GM12878 (cell line): ENCODE measurements at regions of chr5 and their contacts with region 1.

Region 1: DNA sequence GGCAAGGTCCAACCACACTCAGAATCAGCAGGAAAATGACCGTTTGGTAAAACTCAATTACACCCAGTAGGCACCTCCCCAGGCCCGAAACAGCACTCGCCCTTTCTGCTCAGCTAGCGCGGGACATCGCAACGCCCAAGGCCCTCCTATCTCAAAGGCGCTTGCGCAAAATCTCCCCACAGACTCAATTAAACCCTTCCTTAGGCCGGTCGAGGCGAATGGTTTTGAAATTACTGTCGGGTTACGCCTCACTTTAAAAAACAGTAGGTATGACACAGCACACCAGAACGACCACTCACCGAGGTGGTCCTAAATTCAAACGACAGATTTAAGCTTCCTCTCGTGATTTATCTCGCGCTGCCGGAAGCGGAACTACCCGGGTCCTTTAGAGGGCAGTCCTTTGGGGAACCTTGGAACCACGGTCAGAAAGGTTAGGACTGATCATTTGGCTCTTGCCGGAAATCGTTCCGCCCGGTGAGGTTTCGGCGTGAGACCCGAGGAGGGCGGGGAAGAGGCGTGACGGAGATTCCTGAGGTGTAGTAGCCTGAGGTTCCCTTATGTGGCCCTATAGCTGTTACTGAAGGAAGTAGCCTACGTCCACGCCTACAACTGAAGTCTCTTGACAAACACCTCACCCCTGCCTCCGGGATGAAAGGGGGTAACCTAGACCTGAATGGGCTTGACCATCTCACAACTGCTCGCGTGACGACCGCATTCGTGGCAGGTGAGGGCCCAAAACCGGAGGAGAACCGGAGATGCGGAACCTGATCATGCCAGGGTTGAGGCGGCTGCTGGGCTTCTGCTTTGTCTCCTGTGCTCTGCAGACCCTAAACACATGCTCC is at the starts of genes GIN1 and PPIP5K2:
- DNase-seq: peak; percentile 98
- ATAC-seq: peak; percentile 86
- H3K4me3 ChIP-seq: peak within 1 kb of the TSS; percentile 97
- H3K27ac ChIP-seq: peak within 1 kb of the TSS; percentile 97
- H3K4me1 ChIP-seq: no peaks in the 10 kb centered on the region
- H3K27me3 ChIP-seq: no peaks in the 10 kb centered on the region
- CTCF ChIP-seq: no peak
- EP300 ChIP-seq: peak; percentile 42 to 43; a peak in 2 of 4 replicates
- POLR2A ChIP-seq: peak; percentile 75
- RAD21 ChIP-seq: no peak
- polyA plus RNA-seq, gene GIN1: 5.3 to 7.6 TPM
- polyA plus RNA-seq, gene PPIP5K2: 33.4 to 41.2 TPM

Region 2: DNA sequence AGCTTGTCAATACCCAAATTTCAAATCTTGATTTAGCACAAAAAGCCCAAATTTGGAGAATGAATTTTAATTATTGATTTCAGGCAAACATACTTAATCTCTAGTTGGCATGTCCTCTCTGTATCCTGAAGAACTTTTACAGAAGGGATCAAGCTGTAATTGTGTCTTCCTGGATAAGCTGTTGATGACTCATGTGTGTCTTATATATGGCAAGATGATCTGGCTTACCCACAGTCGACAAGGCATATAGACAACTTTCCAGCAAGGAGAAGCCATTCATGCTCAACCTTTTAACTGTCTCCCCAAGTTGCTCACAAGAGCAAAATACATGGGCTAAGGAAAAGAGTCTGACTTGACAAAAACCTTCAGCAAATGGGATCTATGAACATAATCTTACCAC is 508.7 kb before region 1 on chr5:
- CTCF ChIA-PET with region 1: no interaction called
- POLR2A ChIA-PET with region 1: no interaction called
- RAD21 ChIA-PET with region 1: no interaction called
- SMC1A ChIA-PET with region 1: no interaction called
- in situ Hi-C with region 1: no loop called
- intact Hi-C with region 1: no loop called
- DNase-seq: no peak
- ATAC-seq: no peak
- H3K4me3 ChIP-seq: no peak overlapping the region
- H3K27ac ChIP-seq: no peak overlapping the region
- H3K4me1 ChIP-seq: no peaks in the 10 kb centered on the region
- H3K27me3 ChIP-seq: no peaks in the 10 kb centered on the region
- CTCF ChIP-seq: no peak
- EP300 ChIP-seq: no peak
- POLR2A ChIP-seq: no peak
- RAD21 ChIP-seq: no peak

Region 3: DNA sequence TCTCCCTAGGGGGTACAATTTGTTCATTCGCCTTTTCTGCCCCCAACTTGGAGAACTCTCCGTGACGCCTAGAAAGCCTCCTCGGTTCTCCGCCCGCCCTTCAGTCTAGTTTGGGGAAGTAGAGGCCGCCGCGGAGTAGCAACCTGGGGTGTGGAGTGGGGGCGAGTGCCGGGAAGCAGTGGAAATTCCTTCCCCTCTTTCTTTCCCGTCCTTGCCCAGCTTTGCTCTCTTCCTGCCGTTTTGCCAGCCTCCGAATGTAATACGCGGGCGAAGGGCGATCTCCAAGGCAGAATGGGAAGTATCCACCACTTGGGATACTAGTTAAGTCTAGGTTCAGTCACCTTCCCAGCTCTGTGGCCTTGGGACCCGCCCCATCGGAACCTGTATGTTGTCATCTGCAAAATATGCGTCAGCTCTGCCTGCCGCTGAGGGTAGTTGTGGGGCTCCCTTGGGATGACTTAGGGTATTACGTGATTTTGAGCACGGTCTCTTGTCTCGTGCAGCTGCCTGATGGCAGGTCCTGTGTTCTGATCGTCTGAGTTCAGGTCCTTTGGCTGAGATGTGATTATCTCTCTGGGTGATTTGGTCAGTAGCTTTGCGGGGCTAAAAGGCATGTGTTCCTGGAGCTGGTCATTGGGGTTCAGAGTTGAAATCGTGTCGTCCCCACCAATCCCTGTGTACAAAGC is 364.2 kb before region 1 on chr5:
- CTCF ChIA-PET with region 1: interaction called, 5 read pairs
- POLR2A ChIA-PET with region 1: interaction called, 8 read pairs
- RAD21 ChIA-PET with region 1: interaction called, 5 read pairs
- SMC1A ChIA-PET with region 1: interaction called, 10 read pairs
- in situ Hi-C with region 1: loop called (anchors 10 kb)
- intact Hi-C with region 1: loop called (anchors 5 kb)
- DNase-seq: peak; percentile 57
- ATAC-seq: peak; percentile 77
- H3K4me3 ChIP-seq: peak overlapping the region; percentile 99
- H3K27ac ChIP-seq: peak overlapping the region; percentile 81
- H3K4me1 ChIP-seq: peaks cover 11% of the 10 kb centered on the region
- H3K27me3 ChIP-seq: no peaks in the 10 kb centered on the region; a peak in 1 of 4 replicates
- CTCF ChIP-seq: no peak
- EP300 ChIP-seq: peak in 1 of 2 experiments; percentile 10; a peak in 1 of 4 replicates
- POLR2A ChIP-seq: no peak; the same call in 1 of the 2 replicates
- RAD21 ChIP-seq: no peak

Region 4: GRCh38 chr5:102762095-102762534 is 357.9 kb before region 1 on chr5:
- CTCF ChIA-PET with region 1: interaction called, 5 read pairs
- POLR2A ChIA-PET with region 1: interaction called, 3 read pairs
- RAD21 ChIA-PET with region 1: interaction called, 7 read pairs
- SMC1A ChIA-PET with region 1: interaction called, 10 read pairs
- in situ Hi-C with region 1: loop called (anchors 10 kb)
- intact Hi-C with region 1: loop called (anchors 5 kb)
- DNase-seq: no peak
- ATAC-seq: peak; percentile 83
- H3K4me3 ChIP-seq: peak overlapping the region; percentile 70
- H3K27ac ChIP-seq: peak overlapping the region; percentile 79
- H3K4me1 ChIP-seq: peaks cover 6% of the 10 kb centered on the region; the same call in 1 of the 2 replicates
- H3K27me3 ChIP-seq: no peaks in the 10 kb centered on the region
- CTCF ChIP-seq: no peak
- EP300 ChIP-seq: no peak
- POLR2A ChIP-seq: no peak
- RAD21 ChIP-seq: no peak

Region 5: DNA sequence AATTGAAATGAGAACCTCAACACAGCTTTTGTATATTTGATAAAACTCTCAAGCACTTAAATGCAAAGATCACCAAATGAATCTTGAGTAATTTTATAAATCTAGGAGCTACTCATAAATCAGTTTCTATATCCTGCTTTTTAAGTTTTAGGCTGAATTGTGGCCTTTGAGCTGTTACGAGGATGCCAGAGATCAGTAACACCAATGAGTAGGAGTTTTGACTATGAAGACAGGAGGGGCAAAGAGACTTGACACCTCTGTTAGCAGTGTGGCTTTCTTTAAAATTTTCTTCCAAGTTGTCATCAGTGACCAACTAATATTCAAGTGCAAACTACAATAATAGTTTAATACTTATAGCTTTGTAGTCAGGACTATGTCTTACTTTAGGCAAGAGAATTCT is 12.7 kb after region 1 on chr5:
- CTCF ChIA-PET with region 1: interaction called, 10 read pairs
- POLR2A ChIA-PET with region 1: interaction called, 5 read pairs
- RAD21 ChIA-PET with region 1: interaction called, 4 read pairs
- SMC1A ChIA-PET with region 1: interaction called, 12 read pairs
- in situ Hi-C with region 1: no loop called
- intact Hi-C with region 1: no loop called
- DNase-seq: no peak
- ATAC-seq: peak; percentile 42; the same call in 2 of the 3 replicates
- H3K4me3 ChIP-seq: no peak overlapping the region
- H3K27ac ChIP-seq: no peak overlapping the region
- H3K4me1 ChIP-seq: no peaks in the 10 kb centered on the region
- H3K27me3 ChIP-seq: no peaks in the 10 kb centered on the region
- CTCF ChIP-seq: no peak
- EP300 ChIP-seq: no peak
- POLR2A ChIP-seq: no peak
- RAD21 ChIP-seq: no peak

Region 6: DNA sequence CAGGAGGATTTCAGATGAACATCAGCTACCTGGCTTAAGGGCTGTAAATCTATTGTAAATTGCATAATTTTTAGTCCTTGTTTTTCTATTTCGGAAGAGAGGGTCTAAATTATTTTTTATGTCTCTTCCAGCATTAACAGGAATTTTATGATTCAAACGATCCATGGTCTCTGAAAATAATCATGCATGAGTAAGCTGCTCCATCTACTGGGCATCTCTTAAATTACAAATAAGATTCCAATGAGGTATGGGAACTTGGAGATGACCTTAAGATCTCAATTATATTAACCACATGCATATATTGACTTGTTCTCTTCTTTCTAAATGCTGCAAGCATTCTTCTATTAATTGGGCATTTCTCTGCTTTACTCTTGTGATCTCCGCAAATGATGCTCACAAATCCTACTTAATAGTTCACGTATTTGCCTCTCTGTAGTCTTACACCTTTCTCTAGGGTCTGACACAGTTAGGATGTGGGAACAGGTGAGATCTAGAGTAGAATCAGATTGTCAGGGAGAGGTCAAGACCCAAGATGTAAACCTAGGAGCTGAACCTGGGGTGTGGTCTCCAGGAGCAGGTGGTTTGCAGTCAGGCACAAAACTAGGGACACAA is 355.7 kb after region 1 on chr5:
- CTCF ChIA-PET with region 1: no interaction called
- POLR2A ChIA-PET with region 1: no interaction called
- RAD21 ChIA-PET with region 1: no interaction called
- SMC1A ChIA-PET with region 1: no interaction called
- in situ Hi-C with region 1: no loop called
- intact Hi-C with region 1: no loop called
- DNase-seq: no peak
- ATAC-seq: peak; percentile 73
- H3K4me3 ChIP-seq: no peak overlapping the region
- H3K27ac ChIP-seq: no peak overlapping the region
- H3K4me1 ChIP-seq: no peaks in the 10 kb centered on the region
- H3K27me3 ChIP-seq: no peaks in the 10 kb centered on the region; a peak in 1 of 4 replicates
- CTCF ChIP-seq: peak; percentile 45 to 74 (median 53)
- EP300 ChIP-seq: no peak
- POLR2A ChIP-seq: no peak
- RAD21 ChIP-seq: peak; percentile 85